Activated CD4-positive, alpha-beta memory T cell treated with anti-CD3 and anti-CD28 coated beads, Interleukin-2, amount 10 ng/mL, durations not matched to agents 7 days and 5 days (primary cell): ENCODE measurements at regions of chr7 and their contacts with region 1.

Region 1: GRCh38 chr7:6008668-6009611 is at the starts of genes AIMP2 and PMS2:
- DNase-seq: peak; percentile 97
- H3K4me3 Mint-ChIP-seq: peak within 1 kb of the TSS; percentile 86
- H3K27ac Mint-ChIP-seq: peak within 1 kb of the TSS; percentile 90
- H3K4me1 Mint-ChIP-seq: peaks cover 47% of the 10 kb centered on the region
- H3K27me3 Mint-ChIP-seq: no peaks in the 10 kb centered on the region
- total RNA-seq, gene AIMP2: 21.9 to 22.3 TPM
- total RNA-seq, gene PMS2: 19.7 to 21.2 TPM

Region 2: DNA sequence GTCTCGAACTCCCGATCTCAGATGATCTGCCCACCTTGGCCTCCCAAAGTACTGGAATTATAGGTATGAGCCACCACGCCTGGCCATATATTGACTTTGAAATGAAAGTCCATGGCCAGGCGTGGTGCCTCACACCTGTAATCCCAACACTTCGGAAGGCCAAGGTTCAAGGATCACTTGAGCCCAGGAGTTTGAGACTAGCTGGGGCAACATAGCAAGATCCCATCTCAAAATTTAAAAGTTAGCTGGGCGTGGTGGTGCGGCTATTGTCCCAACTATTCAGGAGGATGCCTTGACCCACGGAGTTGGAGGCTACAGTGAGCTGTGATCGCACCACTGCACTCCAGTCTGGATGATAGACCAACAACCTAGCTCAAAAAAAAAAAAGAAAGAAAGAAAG is 116.4 kb before region 1 on chr7:
- CTCF ChIA-PET with region 1: no interaction called
- POLR2A ChIA-PET with region 1: no interaction called
- DNase-seq: no peak
- H3K4me3 Mint-ChIP-seq: no peak overlapping the region
- H3K27ac Mint-ChIP-seq: no peak overlapping the region
- H3K4me1 Mint-ChIP-seq: no peaks in the 10 kb centered on the region
- H3K27me3 Mint-ChIP-seq: no peaks in the 10 kb centered on the region

Region 3: DNA sequence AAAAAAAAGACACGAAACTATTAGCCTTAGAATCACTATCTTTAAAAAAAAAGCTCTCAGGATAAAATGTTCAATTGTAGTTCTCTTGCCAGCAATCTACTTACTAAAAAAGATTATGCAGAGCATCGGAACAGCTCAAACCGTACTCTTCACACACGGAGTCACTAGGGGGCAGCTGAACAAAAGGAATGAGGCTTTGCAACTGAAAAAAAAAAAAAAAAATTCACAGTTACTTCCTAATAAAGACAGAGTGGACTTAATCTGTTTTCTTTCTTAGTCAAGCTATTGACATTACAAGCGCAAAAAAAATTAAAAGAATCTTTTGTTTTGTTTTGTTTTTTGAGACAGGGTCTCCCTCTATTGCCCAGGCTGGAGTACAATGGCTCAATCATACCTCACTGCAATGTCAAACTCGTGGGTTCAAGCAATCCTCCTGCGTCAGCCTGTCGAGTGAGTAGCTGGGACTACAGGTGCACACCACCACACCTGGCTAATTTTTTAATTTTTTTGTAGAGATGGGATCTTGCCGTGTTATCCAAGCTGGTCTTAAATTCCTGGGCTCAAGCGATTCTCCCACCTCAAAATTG is 11.6 kb before region 1 on chr7:
- CTCF ChIA-PET with region 1: interaction called, 23 read pairs
- POLR2A ChIA-PET with region 1: interaction called, 15 read pairs
- DNase-seq: peak; percentile 42
- H3K4me3 Mint-ChIP-seq: no peak overlapping the region
- H3K27ac Mint-ChIP-seq: no peak overlapping the region
- H3K4me1 Mint-ChIP-seq: no peaks in the 10 kb centered on the region
- H3K27me3 Mint-ChIP-seq: no peaks in the 10 kb centered on the region

Region 4: DNA sequence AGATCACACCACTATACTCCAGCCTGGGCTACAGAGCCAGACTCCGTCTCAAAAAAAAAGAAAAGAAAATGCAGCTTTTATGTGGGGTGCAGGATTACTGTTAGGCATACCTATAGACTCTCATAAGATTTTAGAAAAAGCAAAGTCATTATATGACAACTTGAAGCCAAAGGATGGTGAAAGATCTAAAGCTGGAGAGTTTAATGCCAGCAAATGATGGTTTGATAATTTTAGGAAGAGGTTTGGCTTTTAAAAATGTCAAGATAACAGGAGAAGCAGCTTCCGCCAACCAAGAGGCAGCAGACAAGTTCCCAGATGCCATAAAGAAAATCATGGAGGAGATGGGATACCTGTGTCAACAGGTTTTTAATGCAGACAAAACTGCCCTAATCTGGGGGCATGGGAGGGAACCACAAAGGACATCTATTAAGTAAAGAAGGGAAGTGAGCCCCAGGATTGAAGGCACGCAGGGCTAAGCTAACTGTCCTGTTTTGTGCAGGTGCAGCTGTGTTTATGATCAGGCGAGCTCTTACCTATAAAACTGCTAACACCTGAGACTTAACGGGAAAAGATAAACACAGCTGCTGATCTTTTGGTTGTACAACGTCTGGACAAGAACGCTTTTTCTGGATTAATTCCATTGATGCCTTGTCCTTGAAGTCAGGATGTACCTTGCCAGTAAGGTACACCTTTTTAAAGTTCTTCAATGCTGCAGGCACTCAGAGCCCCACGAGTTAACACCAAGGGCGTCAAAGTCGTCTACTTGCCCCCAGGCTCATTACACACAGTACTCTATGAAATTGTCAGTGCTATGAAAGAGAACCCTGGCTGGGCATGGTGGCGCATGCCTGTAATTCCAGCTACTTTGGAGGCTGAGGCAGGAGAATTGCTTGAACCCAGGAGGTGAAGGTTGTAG is 11.7 kb after region 1 on chr7:
- CTCF ChIA-PET with region 1: interaction called, 11 read pairs
- POLR2A ChIA-PET with region 1: interaction called, 14 read pairs
- DNase-seq: no peak
- H3K4me3 Mint-ChIP-seq: no peak overlapping the region
- H3K27ac Mint-ChIP-seq: no peak overlapping the region
- H3K4me1 Mint-ChIP-seq: peaks cover 3% of the 10 kb centered on the region
- H3K27me3 Mint-ChIP-seq: no peaks in the 10 kb centered on the region

Region 5: DNA sequence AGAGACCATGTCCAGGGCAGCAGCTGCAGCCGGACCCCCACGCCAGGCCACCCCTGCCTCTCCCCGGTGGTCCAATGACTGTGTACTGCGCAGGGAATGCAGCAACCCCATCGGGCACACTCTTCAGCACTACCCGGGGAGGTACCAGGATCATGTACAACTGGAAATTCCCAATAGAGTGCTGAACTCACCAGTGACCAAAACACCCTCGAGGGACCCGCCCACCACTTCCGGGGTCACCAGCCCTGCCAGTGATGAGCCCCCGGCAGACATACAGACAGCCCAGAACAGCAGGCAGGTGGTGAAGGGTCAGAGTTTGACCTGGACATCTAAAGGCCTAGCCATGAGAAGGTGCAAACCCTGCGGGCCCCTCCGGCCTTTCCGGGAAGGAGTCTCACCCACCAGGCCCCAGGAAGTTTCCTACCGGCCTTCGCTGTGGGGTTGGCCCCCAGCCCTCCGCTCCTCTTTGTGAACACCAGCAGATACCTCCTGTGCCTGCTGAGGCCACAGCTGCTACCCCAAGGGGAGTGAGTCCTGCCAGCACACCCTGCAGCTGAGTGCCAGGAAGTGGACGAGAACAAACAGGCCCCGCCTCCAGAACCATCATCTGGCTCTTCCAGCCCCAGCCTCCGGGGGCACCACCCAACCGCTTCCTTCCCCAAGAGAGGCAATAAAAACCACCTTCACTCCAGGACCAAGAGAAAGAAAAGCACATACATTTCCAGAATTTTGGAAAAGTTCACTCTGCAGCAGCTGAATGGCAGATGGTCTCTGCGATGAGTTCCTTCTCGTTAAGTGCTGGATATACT is 17.3 kb after region 1 on chr7:
- CTCF ChIA-PET with region 1: interaction called, 11 read pairs
- POLR2A ChIA-PET with region 1: interaction called, 14 read pairs
- DNase-seq: peak; percentile 80
- H3K4me3 Mint-ChIP-seq: peak overlapping the region; percentile 70
- H3K27ac Mint-ChIP-seq: peak overlapping the region; percentile 80
- H3K4me1 Mint-ChIP-seq: peaks cover 20% of the 10 kb centered on the region
- H3K27me3 Mint-ChIP-seq: no peaks in the 10 kb centered on the region

Region 6: DNA sequence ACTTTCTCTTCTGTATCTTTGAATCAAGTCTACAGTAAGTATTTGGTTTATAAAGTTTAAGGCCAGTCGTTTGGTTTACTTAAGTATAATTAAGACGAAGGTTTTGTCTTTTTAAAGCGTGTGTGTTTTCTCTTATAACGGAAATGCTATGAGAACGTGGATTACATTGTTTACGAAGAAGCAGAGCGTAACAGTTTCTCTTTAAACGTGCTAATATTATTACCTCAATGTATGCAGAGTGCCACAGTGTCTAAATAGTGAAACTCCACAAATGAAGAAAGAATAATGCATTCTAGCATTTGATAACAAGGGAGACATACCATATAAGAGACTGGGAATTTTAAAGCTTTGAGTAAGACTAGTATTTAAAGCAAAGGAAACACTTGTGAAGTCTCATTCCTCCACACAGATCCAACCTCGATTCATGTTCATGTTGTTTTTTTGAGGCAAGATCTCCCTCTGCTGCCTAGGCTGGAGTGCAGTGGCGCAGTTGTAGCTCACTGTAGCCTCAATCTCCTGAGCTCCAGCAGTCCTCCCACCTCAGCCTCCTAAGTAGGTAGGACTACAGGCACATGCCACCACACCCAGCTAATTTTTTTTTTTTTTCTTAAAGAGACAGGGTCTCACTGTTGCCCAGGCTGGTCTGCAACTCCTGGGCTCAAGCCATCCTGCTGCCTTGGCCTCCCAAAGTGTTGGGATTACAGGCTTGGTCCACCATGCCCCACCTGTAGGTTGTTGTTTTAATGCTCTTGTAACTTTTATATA is 97.4 kb after region 1 on chr7:
- CTCF ChIA-PET with region 1: interaction called, 12 read pairs
- POLR2A ChIA-PET with region 1: interaction called, 3 read pairs
- DNase-seq: peak; percentile 59
- H3K4me3 Mint-ChIP-seq: peak overlapping the region; percentile 95
- H3K27ac Mint-ChIP-seq: peak overlapping the region; percentile 95
- H3K4me1 Mint-ChIP-seq: peaks cover 36% of the 10 kb centered on the region
- H3K27me3 Mint-ChIP-seq: no peaks in the 10 kb centered on the region